ENCODE measurements at regions of chr19 and their contacts with region 1.

Region 1: DNA sequence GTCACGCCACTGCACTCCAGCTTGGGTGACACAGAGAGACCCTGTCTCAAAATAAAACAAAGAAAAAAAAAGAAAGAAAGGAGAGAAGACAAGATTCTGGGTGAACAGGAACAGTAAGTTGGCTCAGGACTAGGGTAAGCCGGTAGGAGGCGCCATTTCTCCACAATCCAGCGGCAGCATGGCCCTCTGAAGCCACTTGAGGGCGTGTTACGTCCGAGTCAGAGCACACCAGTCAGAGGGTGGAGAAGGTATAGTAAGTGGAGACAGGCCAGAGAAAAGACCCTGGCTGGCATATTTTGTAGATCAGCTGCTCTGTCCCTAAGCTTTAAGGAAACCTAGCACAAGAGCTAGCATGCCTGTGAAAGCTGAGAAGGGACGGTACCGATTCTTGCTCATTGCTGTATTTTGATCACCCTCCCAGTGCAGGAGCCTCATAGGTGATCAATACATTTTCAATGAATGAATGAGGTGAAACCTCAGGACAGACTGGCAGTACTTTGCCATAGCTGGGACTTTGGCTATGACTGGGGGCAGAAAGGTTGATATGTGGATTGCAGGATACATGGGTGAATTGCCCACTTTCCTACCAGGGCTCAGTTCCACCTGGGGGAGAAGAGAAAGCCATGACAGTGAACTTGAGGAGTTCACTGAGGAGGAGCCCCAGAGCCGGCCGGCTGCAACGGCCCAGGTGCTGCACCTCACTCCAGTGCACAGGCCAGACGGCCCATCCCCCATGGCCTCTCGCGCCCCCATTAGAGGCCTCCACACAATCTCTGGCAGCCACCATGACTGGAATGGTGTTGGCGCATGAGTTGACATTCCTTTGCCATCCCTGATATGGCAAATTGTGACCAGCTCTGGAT is 23.5 kb downstream of the POU2F2 start:
- DNase-seq: peak; percentile 94
- H3K4me3 Mint-ChIP-seq: no peak overlapping the region
- H3K27ac Mint-ChIP-seq: peak overlapping the region; percentile 28
- H3K4me1 Mint-ChIP-seq: peaks cover 33% of the 10 kb centered on the region
- H3K27me3 Mint-ChIP-seq: no peaks in the 10 kb centered on the region

Region 2: GRCh38 chr19:42023121-42023942 is 85.4 kb before region 1 on chr19:
- CTCF ChIA-PET with region 1: no interaction called
- DNase-seq: peak; percentile 38
- H3K4me3 Mint-ChIP-seq: no peak overlapping the region
- H3K27ac Mint-ChIP-seq: no peak overlapping the region
- H3K4me1 Mint-ChIP-seq: no peaks in the 10 kb centered on the region
- H3K27me3 Mint-ChIP-seq: peaks cover 28% of the 10 kb centered on the region

Region 3: DNA sequence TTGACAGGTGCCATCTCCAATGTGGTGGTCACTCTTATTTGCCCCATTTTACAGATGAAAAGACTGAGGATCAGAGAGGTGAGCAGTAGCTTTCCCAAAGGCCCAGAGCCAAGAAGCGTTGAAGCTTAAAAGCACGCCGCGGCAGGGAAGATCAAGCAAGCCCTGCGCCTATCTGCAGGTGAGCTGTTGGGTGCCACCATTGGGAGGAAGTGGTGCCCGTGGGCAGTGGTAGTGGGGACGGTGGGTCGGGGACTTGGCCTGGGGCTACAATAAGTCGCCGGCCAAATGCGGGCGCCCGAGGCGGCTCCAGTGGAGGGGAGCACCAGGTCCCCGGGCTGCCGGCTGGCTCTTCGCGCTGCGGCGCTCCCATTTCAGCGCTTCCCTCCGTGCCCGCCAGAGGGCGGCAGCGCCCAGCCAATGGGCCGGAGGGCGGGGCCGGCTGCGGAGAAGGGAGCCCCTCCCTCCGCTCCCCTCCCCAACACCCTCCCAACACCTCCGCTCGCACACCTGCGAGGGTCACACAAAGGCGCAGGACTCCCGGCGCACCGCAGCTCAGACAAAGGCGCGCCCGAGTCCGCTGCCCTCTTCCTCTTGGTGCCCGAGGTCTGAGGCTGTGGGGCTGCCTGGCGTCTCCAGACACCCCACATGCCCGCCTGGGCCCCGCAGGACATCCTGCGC is 24.2 kb after region 1 on chr19:
- CTCF ChIA-PET with region 1: interaction called, 51 read pairs
- DNase-seq: peak; percentile 84
- H3K4me3 Mint-ChIP-seq: peak overlapping the region; percentile 78
- H3K27ac Mint-ChIP-seq: peak overlapping the region; percentile 84
- H3K4me1 Mint-ChIP-seq: peaks cover 65% of the 10 kb centered on the region
- H3K27me3 Mint-ChIP-seq: peaks cover 4% of the 10 kb centered on the region

Region 4: GRCh38 chr19:42219812-42220750 is 111.3 kb after region 1 on chr19 and contains the start of gene ZNF526:
- CTCF ChIA-PET with region 1: no interaction called
- DNase-seq: peak; percentile 98
- H3K4me3 Mint-ChIP-seq: peak within 1 kb of the TSS; percentile 89
- H3K27ac Mint-ChIP-seq: peak within 1 kb of the TSS; percentile 86
- H3K4me1 Mint-ChIP-seq: peaks cover 60% of the 10 kb centered on the region
- H3K27me3 Mint-ChIP-seq: no peaks in the 10 kb centered on the region

Region 5: GRCh38 chr19:42244347-42245220 is 135.8 kb after region 1 on chr19:
- CTCF ChIA-PET with region 1: interaction called, 11 read pairs
- DNase-seq: peak; percentile 96
- H3K4me3 Mint-ChIP-seq: peak overlapping the region; percentile 96
- H3K27ac Mint-ChIP-seq: peak overlapping the region; percentile 93
- H3K4me1 Mint-ChIP-seq: peaks cover 57% of the 10 kb centered on the region
- H3K27me3 Mint-ChIP-seq: no peaks in the 10 kb centered on the region

Region 6: DNA sequence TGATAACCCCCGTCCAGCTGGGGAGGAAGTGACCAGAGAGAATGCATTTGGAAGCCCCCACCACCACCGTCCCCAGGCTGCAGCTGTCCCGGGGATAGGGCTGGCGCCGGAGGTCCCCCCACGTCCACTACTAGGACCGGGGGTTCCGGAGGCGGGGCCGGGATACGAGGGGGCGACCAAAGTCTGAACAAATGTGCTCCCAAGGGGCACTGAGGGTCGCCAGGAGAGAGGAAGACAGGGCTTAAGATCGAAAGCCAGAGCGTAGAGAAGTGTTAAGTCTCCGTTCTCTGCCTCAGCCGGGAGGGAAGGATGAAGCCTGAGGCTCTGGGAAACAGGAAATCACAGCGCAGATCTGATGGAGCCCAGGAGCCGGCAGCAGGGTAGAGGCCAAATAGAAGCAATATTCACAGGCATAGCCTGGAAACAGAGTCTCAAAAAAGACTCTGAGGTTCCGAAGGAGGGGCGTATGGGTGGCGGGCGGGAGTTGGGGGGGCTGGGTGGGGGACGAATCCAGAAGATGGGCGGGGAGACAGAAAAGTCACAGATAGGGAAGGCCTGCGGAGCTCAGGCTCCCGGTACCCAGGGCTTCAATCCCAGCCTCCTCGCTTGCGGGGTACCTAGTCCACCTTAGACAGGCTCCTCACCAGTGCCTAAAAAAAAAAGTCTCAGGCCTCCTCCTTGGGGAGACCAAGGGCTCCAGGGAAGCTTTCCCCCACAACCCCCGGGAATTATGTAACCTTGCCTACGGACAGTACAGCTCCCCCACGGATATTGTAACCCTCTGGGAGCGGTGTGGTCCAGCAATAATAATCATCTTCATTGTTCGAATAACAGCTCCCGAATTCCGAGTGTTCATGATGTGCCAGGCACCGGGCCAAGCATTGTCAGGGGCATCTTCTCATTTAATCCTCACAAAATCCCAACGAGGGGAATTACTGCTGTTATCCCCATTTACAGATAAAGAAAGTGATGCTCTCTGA is 147.3 kb after region 1 on chr19:
- CTCF ChIA-PET with region 1: no interaction called
- DNase-seq: peak; percentile 41
- H3K4me3 Mint-ChIP-seq: peak overlapping the region; percentile 77
- H3K27ac Mint-ChIP-seq: peak overlapping the region; percentile 68
- H3K4me1 Mint-ChIP-seq: peaks cover 28% of the 10 kb centered on the region
- H3K27me3 Mint-ChIP-seq: peaks cover 40% of the 10 kb centered on the region

Region 7: GRCh38 chr19:42401365-42402303 is 292.9 kb after region 1 on chr19:
- CTCF ChIA-PET with region 1: interaction called, 18 read pairs
- DNase-seq: peak; percentile 78
- H3K4me3 Mint-ChIP-seq: peak overlapping the region; percentile 68
- H3K27ac Mint-ChIP-seq: peak overlapping the region; percentile 28
- H3K4me1 Mint-ChIP-seq: peaks cover 40% of the 10 kb centered on the region
- H3K27me3 Mint-ChIP-seq: peaks cover 21% of the 10 kb centered on the region